Activated CD4-positive, alpha-beta T cell treated with anti-CD3 and anti-CD28 coated beads for 36 hours (primary cell): ENCODE measurements at regions of chr17 and their contacts with region 1.

Region 1: GRCh38 chr17:31437720-31438420 is 46.4 kb downstream of the RAB11FIP4 start:
- DNase-seq: no peak
- ATAC-seq: no peak
- H3K4me3 Mint-ChIP-seq: no peak overlapping the region
- H3K27ac Mint-ChIP-seq: no peak overlapping the region
- H3K4me1 Mint-ChIP-seq: peaks cover 11% of the 10 kb centered on the region
- H3K27me3 Mint-ChIP-seq: no peaks in the 10 kb centered on the region

Region 2: GRCh38 chr17:30886187-30886586 is 551.7 kb before region 1 on chr17:
- CTCF ChIA-PET with region 1: no interaction called
- POLR2A ChIA-PET with region 1: no interaction called
- intact Hi-C with region 1: no loop called
- DNase-seq: no peak
- ATAC-seq: no peak
- H3K4me3 Mint-ChIP-seq: no peak overlapping the region
- H3K27ac Mint-ChIP-seq: no peak overlapping the region
- H3K4me1 Mint-ChIP-seq: no peaks in the 10 kb centered on the region
- H3K27me3 Mint-ChIP-seq: no peaks in the 10 kb centered on the region

Region 3: GRCh38 chr17:31524926-31525800 is 87.3 kb after region 1 on chr17:
- CTCF ChIA-PET with region 1: interaction called, 25 read pairs
- POLR2A ChIA-PET with region 1: no interaction called
- intact Hi-C with region 1: loop called (anchors 1 kb)
- DNase-seq: peak; percentile 93
- ATAC-seq: peak; percentile 88
- H3K4me3 Mint-ChIP-seq: no peak overlapping the region
- H3K27ac Mint-ChIP-seq: no peak overlapping the region
- H3K4me1 Mint-ChIP-seq: no peaks in the 10 kb centered on the region
- H3K27me3 Mint-ChIP-seq: no peaks in the 10 kb centered on the region